ENCODE measurements at regions of chr15 and their contacts with region 1.

Region 1: GRCh38 chr15:25368850-25369249 is 70.0 kb downstream of the UBE3A start:
- DNase-seq: no peak
- H3K4me3 ChIP-seq: no peak overlapping the region
- H3K27ac ChIP-seq: no peak overlapping the region
- H3K4me1 ChIP-seq: no peaks in the 10 kb centered on the region
- H3K27me3 ChIP-seq: no peaks in the 10 kb centered on the region
- CTCF ChIP-seq: no peak
- EP300 ChIP-seq: no peak
- POLR2A ChIP-seq: no peak

Region 2: DNA sequence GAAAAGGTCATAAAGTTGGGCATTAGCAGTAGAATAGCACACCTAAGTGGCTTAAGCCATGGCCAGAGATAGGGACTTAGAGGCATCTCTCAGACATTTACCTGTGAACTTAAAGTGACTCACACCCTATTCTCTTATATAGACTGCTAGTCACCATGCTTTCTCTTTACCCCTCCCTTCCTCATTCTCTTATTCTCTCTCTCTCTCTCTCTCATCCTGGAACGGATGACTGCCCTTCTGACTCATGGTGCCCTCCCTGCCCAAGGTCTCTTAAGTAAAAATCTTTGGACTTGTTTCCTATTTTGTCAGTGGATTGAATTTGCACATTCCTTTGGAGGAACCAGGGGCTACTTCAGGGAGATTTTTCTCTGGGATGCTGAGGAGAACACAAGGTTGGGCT is 634.5 kb before region 1 on chr15:
- intact Hi-C with region 1: no loop called
- DNase-seq: no peak
- H3K4me3 ChIP-seq: no peak overlapping the region
- H3K27ac ChIP-seq: no peak overlapping the region
- H3K4me1 ChIP-seq: no peaks in the 10 kb centered on the region
- H3K27me3 ChIP-seq: no peaks in the 10 kb centered on the region
- CTCF ChIP-seq: no peak
- EP300 ChIP-seq: no peak
- POLR2A ChIP-seq: no peak

Region 3: DNA sequence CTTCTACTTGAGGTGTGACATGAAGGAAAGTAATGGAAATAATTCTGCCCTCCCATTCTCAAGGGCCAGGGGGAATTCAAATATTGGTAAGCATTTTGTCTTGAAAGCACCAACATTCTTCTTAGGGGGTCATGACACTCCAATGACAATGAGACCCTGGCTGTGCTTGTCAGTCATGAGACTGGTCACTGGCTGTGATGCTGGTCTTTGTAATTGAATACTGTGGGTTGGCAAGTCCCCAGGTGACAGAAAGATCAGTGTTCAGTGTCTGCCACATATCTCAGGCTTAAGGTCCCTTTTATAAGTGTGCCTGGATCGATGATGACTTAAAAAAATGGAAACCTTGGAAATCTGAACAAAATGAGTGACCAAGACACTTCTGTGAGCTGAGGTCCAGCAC is 262.6 kb before region 1 on chr15:
- intact Hi-C with region 1: loop called in 1 of 4 experiments (anchors 10 kb)
- DNase-seq: no peak
- H3K4me3 ChIP-seq: no peak overlapping the region
- H3K27ac ChIP-seq: no peak overlapping the region
- H3K4me1 ChIP-seq: no peaks in the 10 kb centered on the region
- H3K27me3 ChIP-seq: no peaks in the 10 kb centered on the region
- CTCF ChIP-seq: no peak
- EP300 ChIP-seq: no peak
- POLR2A ChIP-seq: no peak